Thyroid gland (tissue), 4 donors: ENCODE measurements at regions of chr9 and their contacts with region 1.

Region 1: GRCh38 chr9:93003552-93004407 is 54.7 kb upstream of the SUSD3 start:
- DNase-seq: peak; percentile 96
- H3K4me3 ChIP-seq: peak overlapping the region in 1 of 3 donors; percentile 10
- H3K27ac ChIP-seq: peak overlapping the region; percentile 77 to 84 (median 79)
- H3K4me1 ChIP-seq: peaks cover 16 to 23% of the 10 kb centered on the region in 2 donors
- H3K27me3 ChIP-seq: no peaks in the 10 kb centered on the region
- CTCF ChIP-seq: peak; percentile 9 to 84 (median 74)
- POLR2A ChIP-seq: peak in 1 of 2 donors; percentile 46

Region 2: DNA sequence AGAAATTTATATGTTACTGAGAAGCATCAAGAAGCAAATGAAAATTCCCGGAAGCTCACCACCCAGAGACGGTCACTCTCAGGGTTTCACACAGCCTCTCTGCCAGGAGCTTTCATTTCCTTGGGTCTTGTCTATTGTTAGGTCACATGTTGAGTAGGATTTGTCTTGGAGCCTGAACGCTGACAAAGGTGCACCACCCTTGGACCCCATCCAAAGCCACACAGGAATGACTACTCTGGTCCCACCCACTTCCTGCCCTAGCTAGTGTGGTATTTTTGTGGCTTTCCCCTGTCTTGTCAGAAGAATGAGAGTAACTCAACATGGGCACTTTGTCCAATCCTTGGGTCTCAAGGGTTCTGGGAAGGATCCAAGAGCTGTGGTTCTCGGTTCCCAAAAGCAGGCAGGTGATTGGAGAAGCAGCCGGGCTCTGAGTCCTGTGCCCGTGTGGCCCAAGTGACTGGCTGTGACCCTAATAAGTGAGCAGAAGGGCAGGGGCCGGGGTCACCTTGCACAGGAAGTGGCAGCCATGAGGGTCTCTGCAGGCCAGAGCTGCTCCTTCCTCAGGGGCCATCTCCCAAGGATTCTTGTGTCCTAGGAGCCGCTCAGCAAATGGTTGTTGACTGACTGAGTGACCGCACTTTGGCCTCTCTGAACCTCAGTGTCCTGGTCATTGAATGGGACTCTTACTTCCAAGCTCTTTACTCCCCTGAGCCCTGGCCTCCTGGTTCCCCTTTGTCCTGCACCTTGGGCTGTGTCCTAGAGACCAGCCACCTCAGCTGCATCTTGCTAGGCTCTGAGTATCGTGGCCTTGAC is 49.5 kb before region 1 on chr9:
- intact Hi-C with region 1: loop called (anchors 10 kb)
- DNase-seq: peak; percentile 33 to 35
- H3K4me3 ChIP-seq: no peak overlapping the region
- H3K27ac ChIP-seq: peak overlapping the region in 1 of 3 donors; percentile 42
- H3K4me1 ChIP-seq: peaks cover 10 to 18% of the 10 kb centered on the region in 2 donors
- H3K27me3 ChIP-seq: no peaks in the 10 kb centered on the region
- CTCF ChIP-seq: no peak
- POLR2A ChIP-seq: no peak

Region 3: DNA sequence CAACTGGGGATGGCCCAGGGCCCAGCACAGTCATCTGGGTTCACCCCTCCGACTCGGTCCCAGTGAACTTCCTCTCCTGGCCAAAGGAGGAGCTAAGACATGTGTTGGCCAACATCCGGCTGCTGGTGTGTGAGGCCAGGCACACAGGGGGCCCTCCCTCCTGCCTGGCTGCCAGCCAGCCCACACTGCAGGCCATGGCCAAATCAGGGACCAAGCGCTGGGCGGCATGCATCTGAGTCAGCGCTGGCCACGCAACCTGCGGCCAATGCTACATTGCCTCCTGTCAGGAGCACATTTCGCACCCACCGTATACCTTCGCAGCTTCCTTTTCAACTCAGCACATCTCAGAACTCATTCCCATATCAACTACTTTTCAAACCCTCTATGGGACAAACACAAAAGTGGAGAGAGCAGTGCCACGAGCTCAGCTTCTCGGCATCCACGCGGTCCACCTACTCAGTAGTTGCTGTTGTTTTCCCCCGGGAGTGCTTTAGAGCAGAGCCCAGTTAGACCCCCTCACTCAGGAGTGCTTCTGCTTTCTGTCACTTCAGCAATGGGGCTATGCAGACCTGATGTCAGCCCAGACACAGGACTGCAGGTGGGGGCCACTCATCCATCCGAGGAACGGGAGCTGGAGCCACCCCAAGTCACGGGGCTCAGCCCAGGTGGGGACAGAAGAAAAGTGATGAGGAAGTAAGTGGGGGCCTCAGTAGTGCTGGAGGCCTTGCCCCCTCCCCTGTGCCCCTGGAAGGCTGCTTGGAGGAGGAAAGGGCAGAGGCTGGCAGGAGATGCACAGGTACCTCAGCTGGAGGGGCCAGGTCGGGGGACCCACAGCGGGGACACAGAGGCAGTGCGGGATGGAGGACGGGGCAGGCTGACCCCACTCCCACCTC is 116.4 kb after region 1 on chr9:
- intact Hi-C with region 1: loop called (anchors 10 kb)
- DNase-seq: peak; percentile 97 to 98
- H3K4me3 ChIP-seq: no peak overlapping the region
- H3K27ac ChIP-seq: peak overlapping the region; percentile 77 to 79 (median 79)
- H3K4me1 ChIP-seq: peaks cover 23 to 35% of the 10 kb centered on the region in 2 donors
- H3K27me3 ChIP-seq: no peaks in the 10 kb centered on the region
- CTCF ChIP-seq: peak; percentile 11 to 65 (median 56)
- POLR2A ChIP-seq: peak in 1 of 2 donors; percentile 39